Activated CD4-positive, alpha-beta memory T cell treated with anti-CD3 and anti-CD28 coated beads, Interleukin-2, amount 10 ng/mL, durations not matched to agents 7 days and 5 days (primary cell): ENCODE measurements at regions of chr1 and their contacts with region 1.

Region 1: GRCh38 chr1:18575620-18576019 is 55.0 kb upstream of the PAX7 start:
- DNase-seq: peak; percentile 45
- H3K4me3 Mint-ChIP-seq: no peak overlapping the region
- H3K27ac Mint-ChIP-seq: no peak overlapping the region
- H3K4me1 Mint-ChIP-seq: no peaks in the 10 kb centered on the region
- H3K27me3 Mint-ChIP-seq: peaks cover 3% of the 10 kb centered on the region

Region 2: GRCh38 chr1:18556364-18556763 is 19.3 kb before region 1 on chr1:
- CTCF ChIA-PET with region 1: interaction called, 11 read pairs
- POLR2A ChIA-PET with region 1: no interaction called
- DNase-seq: no peak
- H3K4me3 Mint-ChIP-seq: no peak overlapping the region
- H3K27ac Mint-ChIP-seq: no peak overlapping the region
- H3K4me1 Mint-ChIP-seq: peaks cover 3% of the 10 kb centered on the region
- H3K27me3 Mint-ChIP-seq: peaks cover 28% of the 10 kb centered on the region

Region 3: DNA sequence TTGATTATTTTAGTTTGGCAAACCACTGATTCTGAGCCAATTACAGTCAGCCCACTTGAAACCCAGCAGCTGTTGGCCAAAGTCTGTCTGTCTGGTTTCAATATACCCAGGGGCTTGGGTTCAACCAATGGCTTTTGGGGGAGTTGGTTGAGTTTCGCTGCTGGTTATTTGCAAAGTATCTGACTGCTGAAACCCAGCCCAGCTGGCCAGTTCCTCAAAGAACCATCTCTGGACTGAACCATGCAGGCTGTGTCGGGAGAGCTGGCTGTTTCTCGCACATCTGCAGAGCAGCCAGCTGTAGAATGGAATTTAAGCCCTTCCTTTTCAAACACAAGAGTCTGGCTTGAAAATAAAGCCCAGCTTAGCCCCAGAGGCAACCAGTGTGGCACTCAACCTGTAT is 10.9 kb before region 1 on chr1:
- CTCF ChIA-PET with region 1: interaction called, 11 read pairs
- POLR2A ChIA-PET with region 1: no interaction called
- DNase-seq: no peak
- H3K4me3 Mint-ChIP-seq: no peak overlapping the region
- H3K27ac Mint-ChIP-seq: no peak overlapping the region
- H3K4me1 Mint-ChIP-seq: no peaks in the 10 kb centered on the region
- H3K27me3 Mint-ChIP-seq: peaks cover 7% of the 10 kb centered on the region

Region 4: GRCh38 chr1:18588093-18588492 is 12.5 kb after region 1 on chr1:
- CTCF ChIA-PET with region 1: interaction called, 30 read pairs
- POLR2A ChIA-PET with region 1: no interaction called
- DNase-seq: no peak
- H3K4me3 Mint-ChIP-seq: no peak overlapping the region
- H3K27ac Mint-ChIP-seq: no peak overlapping the region
- H3K4me1 Mint-ChIP-seq: no peaks in the 10 kb centered on the region
- H3K27me3 Mint-ChIP-seq: peaks cover 11% of the 10 kb centered on the region